Activated CD4-positive, alpha-beta T cell treated with anti-CD3 and anti-CD28 coated beads, Interleukin-2, amount 10 ng/mL, durations not matched to agents 24 days and 14 days (primary cell): ENCODE measurements at regions of chr19 and their contacts with region 1.

Region 1: DNA sequence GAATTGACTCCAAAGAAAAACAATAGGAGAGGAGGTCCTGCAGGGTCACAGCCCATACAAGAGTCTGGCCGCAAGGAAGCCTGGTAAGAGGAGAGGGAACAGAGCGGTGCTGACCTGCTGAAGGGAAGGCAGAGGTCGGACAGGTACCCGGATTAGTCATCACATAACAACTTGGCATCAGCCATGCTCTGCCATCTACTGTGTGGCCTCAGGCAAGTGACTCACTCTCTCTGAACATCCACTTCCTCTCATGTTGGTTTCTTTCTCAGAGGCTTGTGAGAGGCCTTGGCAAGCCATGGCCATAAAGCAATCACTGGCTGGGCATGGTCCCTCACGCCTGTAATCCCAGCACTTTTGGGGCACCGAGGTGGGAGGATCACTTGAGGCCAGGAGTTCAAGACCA is 7.4 kb upstream of the CAPNS1 start:
- DNase-seq: peak; percentile 76
- H3K4me3 Mint-ChIP-seq: peak overlapping the region; percentile 24
- H3K27ac Mint-ChIP-seq: peak overlapping the region; percentile 54
- H3K4me1 Mint-ChIP-seq: peaks cover 25% of the 10 kb centered on the region
- H3K27me3 Mint-ChIP-seq: no peaks in the 10 kb centered on the region

Region 2: DNA sequence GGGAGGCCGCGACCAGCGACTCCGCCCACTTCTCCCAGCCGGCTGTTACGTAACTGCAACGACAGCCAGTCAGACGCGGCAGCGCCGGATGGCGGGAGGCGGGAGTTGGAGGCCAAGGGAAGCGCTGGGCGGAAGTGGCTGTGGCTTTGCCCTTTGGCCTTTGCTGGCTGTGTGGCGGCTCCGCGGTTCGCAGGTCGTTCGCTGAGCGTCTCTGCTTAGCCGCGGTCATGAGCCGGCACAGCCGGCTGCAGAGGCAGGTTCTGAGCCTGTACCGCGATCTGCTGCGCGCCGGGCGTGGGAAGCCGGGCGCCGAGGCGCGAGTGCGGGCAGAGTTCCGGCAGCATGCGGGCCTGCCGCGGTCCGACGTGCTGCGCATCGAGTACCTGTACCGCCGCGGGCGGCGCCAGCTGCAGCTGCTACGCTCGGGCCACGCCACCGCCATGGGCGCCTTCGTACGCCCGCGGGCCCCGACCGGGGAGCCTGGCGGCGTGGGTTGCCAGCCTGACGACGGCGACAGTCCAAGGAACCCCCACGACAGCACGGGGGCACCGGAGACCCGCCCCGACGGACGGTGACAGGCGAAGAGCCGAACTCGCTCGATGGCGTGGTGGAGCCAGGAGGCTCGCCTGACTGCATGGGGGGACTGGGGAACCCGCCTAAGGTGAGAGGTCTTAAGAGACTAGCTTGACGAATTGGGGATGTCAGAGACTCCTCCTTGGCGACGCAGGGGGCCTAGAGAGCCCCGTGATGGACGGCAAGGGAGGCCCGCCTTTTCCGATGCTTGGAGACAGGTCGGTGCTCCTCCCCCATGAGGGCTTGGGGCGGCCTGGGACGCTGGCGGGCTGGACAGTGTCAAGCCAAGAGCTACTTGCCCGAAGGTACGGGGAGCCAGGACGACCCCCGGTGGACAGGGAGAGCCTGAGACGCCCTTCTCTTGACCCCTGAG is 137.2 kb before region 1 on chr19 and contains the start of gene SDHAF1:
- intact Hi-C with region 1: loop called (anchors 5 kb)
- DNase-seq: peak; percentile 98
- H3K4me3 Mint-ChIP-seq: peak within 1 kb of the TSS; percentile 92
- H3K27ac Mint-ChIP-seq: peak within 1 kb of the TSS; percentile 92
- H3K4me1 Mint-ChIP-seq: peaks cover 31% of the 10 kb centered on the region
- H3K27me3 Mint-ChIP-seq: no peaks in the 10 kb centered on the region
- total RNA-seq, gene SDHAF1: 21.4 and 23.1 TPM in 2 replicates

Region 3: GRCh38 chr19:36103626-36104552 is 28.6 kb before region 1 on chr19:
- intact Hi-C with region 1: no loop called
- DNase-seq: no peak
- H3K4me3 Mint-ChIP-seq: no peak overlapping the region
- H3K27ac Mint-ChIP-seq: peak overlapping the region; percentile 29
- H3K4me1 Mint-ChIP-seq: no peaks in the 10 kb centered on the region
- H3K27me3 Mint-ChIP-seq: no peaks in the 10 kb centered on the region

Region 4: GRCh38 chr19:36114763-36115452 is 17.6 kb before region 1 on chr19 and contains the start of gene POLR2I:
- intact Hi-C with region 1: loop called (anchors 1 kb)
- DNase-seq: peak; percentile 99
- H3K4me3 Mint-ChIP-seq: peak within 1 kb of the TSS; percentile 94
- H3K27ac Mint-ChIP-seq: peak within 1 kb of the TSS; percentile 95
- H3K4me1 Mint-ChIP-seq: peaks cover 29% of the 10 kb centered on the region
- H3K27me3 Mint-ChIP-seq: peaks cover 4% of the 10 kb centered on the region
- total RNA-seq, gene POLR2I: 83.4 and 86.3 TPM in 2 replicates

Region 5: DNA sequence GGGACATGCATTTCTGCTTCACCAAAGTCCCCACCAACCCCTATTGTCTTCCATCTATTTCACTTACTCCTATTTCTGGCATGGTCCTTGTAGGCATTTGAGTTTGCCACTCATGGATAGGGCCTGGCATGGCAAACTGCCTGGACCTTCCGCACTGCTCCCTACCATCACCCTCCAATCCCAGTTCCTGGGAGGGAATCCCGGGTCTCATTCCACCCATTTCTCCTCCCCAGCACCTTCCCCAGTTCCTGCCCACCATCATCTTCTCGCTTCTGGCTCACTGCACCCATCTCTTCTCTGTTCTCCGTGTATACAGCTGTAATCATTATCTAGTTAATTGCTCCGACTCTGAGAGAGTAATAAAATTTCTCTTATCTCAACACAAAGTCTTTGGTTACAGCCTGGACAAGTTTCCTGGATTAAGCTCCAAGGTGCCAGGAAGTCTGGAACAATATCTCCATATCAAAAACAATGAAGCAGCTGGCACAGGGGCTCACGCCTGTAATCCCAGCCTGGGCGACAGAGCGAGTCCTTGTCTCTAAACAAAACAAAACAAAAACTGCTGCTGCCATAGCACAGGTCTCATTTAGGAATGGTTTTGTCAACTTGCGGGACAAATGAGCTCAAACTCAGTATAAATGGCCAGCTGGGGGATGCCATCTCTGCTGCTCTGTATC is 36.7 kb after region 1 on chr19:
- intact Hi-C with region 1: loop called (anchors 1 kb)
- DNase-seq: no peak
- H3K4me3 Mint-ChIP-seq: no peak overlapping the region
- H3K27ac Mint-ChIP-seq: no peak overlapping the region
- H3K4me1 Mint-ChIP-seq: peaks cover 2% of the 10 kb centered on the region
- H3K27me3 Mint-ChIP-seq: no peaks in the 10 kb centered on the region

Region 6: GRCh38 chr19:36456831-36457230 is 324.3 kb after region 1 on chr19:
- intact Hi-C with region 1: no loop called
- DNase-seq: no peak
- H3K4me3 Mint-ChIP-seq: no peak overlapping the region
- H3K27ac Mint-ChIP-seq: no peak overlapping the region
- H3K4me1 Mint-ChIP-seq: no peaks in the 10 kb centered on the region
- H3K27me3 Mint-ChIP-seq: no peaks in the 10 kb centered on the region